ENCODE measurements at regions of chrX and their contacts with region 1.

Region 1: DNA sequence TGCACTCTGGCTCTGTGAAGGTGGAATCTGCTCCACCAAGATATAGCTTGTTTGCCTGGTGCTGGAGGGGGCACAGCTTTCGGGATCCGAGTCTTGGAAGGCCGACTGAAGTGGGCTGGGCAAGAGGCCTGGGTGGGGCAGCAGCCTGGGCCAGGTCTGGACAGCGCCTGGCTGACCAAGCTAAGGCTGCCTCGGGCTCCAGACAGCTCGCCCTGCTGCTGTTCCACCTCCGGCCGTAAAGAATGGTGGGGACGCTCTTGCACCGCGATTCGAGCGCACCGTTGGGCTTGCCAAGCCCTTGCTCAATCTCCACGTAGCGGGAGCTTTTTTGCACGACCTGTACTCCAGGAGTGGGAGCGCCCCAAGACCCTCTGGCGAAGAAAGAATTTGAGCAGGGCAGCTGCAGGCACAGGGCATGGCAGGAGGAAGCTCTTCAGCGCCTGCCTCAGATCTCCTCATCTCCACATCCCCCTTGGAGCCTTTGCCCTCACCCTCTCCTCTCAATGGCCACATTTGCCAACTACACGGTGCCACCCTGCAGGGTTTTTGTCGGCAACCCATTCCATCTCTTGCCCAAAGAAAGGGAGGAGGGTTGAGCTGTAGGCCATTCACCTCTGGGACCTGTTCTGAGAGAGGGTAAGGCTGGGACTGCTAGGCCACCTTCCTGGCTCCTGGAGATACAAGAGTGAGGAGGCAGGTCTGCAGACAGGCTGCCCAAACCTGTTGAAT is 18.9 kb downstream of the CNGA2 start:
- DNase-seq: no peak
- H3K4me3 ChIP-seq: no peak overlapping the region
- H3K27ac ChIP-seq: no peak overlapping the region
- H3K4me1 ChIP-seq: peaks cover 0 to 5% (median 0%) of the 10 kb centered on the region in 4 donors
- H3K27me3 ChIP-seq: peaks cover 0 to 7% (median 0%) of the 10 kb centered on the region in 4 donors
- CTCF ChIP-seq: peak; percentile 62 to 77 (median 62)
- EP300 ChIP-seq: no peak
- POLR2A ChIP-seq: no peak

Region 2: DNA sequence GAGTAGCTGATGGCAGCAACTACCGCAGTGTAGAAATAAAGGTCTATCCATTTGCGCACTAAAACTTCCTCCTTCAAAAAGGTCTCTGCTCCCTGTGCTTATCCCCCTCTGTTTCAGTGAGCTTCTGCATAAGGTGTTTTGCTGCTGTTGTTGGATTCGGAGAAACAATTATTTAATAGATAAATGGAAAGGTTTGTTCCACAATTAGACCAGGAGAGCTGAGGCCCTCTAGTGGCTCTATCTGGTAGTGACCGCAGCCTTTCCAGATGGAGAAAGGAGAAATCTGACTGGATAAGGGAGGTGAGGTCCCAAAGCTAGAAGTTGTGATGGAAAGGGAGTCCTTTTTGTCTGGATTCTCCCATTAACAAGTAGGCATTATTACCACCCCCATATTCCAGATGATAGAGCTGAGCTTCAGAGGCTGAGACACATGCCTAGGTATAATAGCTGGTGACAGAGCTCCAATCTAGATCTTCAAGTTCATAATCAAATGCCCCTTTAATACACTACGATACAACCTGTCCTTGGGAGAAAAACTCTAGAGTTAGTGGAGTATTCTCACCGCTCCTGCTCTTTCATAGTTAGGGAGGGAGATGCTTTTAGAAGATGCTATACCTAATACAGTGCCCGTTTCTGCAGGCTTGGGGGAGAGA is 879.1 kb after region 1 on chrX:
- intact Hi-C with region 1: loop called (anchors 5 kb)
- DNase-seq: peak; percentile 87
- H3K4me3 ChIP-seq: no peak overlapping the region
- H3K27ac ChIP-seq: no peak overlapping the region
- H3K4me1 ChIP-seq: peaks cover 0 to 1% (median 0%) of the 10 kb centered on the region in 4 donors
- H3K27me3 ChIP-seq: peaks cover 0 to 6% (median 3%) of the 10 kb centered on the region in 4 donors
- CTCF ChIP-seq: peak; percentile 56 to 72 (median 57)
- EP300 ChIP-seq: no peak
- POLR2A ChIP-seq: no peak

Measured in esophagus muscularis mucosa (tissue), 4 donors.